Activated B cell treated with CpG ODN at 0.5 μM for 24 hours (primary cell): ENCODE measurements at regions of chr21 and their contacts with region 1.

Region 1: DNA sequence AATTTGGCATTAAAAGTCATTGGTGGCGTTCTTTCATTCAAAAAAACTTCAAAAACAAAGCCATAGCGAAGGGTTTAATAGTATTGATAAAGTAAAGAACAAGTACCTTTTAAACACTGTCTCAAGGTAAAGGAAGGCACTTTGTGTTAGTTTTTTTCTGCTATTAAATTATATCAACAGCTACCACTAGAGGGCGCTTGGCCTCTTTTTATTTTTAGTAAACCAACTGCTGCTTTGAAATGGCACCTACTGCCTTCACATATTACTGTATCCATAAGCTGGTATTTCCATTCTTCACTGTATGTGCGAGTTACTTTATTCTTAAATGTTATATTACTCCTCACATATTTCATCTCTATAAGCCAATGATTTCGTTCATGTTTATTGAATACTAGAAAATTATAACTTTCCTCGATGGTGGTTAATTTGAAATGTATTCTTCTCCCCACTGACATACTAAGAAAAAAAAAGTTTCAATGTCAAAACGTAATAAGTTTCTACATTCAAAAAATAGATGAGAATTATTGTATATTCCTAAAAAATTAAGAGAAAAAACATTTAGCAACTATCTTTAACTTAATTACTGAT is 125.7 kb upstream of the CXADR start:
- DNase-seq: no peak
- ATAC-seq: peak; percentile 25
- H3K4me3 Mint-ChIP-seq: no peak overlapping the region
- H3K27ac Mint-ChIP-seq: no peak overlapping the region
- H3K4me1 Mint-ChIP-seq: no peaks in the 10 kb centered on the region
- H3K27me3 Mint-ChIP-seq: no peaks in the 10 kb centered on the region
- CTCF ChIP-seq: peak; percentile 42

Region 2: GRCh38 chr21:17371450-17371849 is 15.7 kb before region 1 on chr21:
- CTCF ChIA-PET with region 1: no interaction called
- POLR2A ChIA-PET with region 1: no interaction called
- intact Hi-C with region 1: loop called (anchors 1 kb)
- DNase-seq: no peak
- ATAC-seq: no peak
- H3K4me3 Mint-ChIP-seq: no peak overlapping the region
- H3K27ac Mint-ChIP-seq: no peak overlapping the region
- H3K4me1 Mint-ChIP-seq: no peaks in the 10 kb centered on the region
- H3K27me3 Mint-ChIP-seq: no peaks in the 10 kb centered on the region
- CTCF ChIP-seq: no peak

Region 3: GRCh38 chr21:17585875-17586450 is 198.8 kb after region 1 on chr21:
- CTCF ChIA-PET with region 1: interaction called, 14 read pairs
- POLR2A ChIA-PET with region 1: no interaction called
- intact Hi-C with region 1: no loop called
- DNase-seq: no peak
- ATAC-seq: no peak
- H3K4me3 Mint-ChIP-seq: no peak overlapping the region
- H3K27ac Mint-ChIP-seq: no peak overlapping the region
- H3K4me1 Mint-ChIP-seq: no peaks in the 10 kb centered on the region
- H3K27me3 Mint-ChIP-seq: peaks cover 2% of the 10 kb centered on the region
- CTCF ChIP-seq: no peak

Region 4: DNA sequence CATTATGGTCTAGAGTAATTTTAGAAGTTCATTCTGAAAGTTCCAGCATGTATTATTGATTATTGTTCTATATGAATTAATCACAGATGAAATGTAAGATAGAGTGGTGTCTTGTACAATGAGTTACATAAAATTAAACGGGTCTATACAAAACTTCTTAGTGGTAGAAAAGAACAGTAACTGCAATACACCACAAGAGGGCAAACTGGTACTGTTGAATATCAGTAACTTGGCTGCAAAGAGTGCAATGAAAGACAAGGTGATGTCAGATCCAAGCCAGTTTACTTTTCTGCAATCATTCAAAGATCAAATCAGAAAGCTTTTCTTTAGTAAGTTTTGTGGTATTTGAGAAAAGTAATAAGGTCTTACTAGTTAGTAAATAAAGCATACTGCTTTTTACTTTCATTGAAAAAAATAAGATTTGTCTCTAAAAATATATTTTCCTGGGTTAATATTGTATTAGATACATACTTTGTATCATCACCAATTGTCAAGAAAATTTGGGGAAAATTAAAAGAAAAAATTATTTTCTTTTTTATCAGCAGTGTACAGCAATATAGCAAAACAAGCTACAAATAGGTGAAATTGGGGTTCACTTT is 292.0 kb after region 1 on chr21:
- CTCF ChIA-PET with region 1: no interaction called
- POLR2A ChIA-PET with region 1: no interaction called
- intact Hi-C with region 1: loop called (anchors 10 kb)
- DNase-seq: no peak
- ATAC-seq: peak; percentile 81
- H3K4me3 Mint-ChIP-seq: no peak overlapping the region
- H3K27ac Mint-ChIP-seq: no peak overlapping the region
- H3K4me1 Mint-ChIP-seq: no peaks in the 10 kb centered on the region
- H3K27me3 Mint-ChIP-seq: no peaks in the 10 kb centered on the region
- CTCF ChIP-seq: peak; percentile 44

Region 5: GRCh38 chr21:17903029-17903806 is 516.1 kb after region 1 on chr21:
- CTCF ChIA-PET with region 1: no interaction called
- POLR2A ChIA-PET with region 1: no interaction called
- intact Hi-C with region 1: loop called (anchors 1 kb)
- DNase-seq: no peak
- ATAC-seq: peak; percentile 37
- H3K4me3 Mint-ChIP-seq: no peak overlapping the region
- H3K27ac Mint-ChIP-seq: no peak overlapping the region
- H3K4me1 Mint-ChIP-seq: peaks cover 6% of the 10 kb centered on the region
- H3K27me3 Mint-ChIP-seq: no peaks in the 10 kb centered on the region
- CTCF ChIP-seq: no peak